CD14-positive monocyte (primary cell): ENCODE measurements at regions of chr7 and their contacts with region 1.

Region 1: GRCh38 chr7:19470031-19470430 is 238.8 kb downstream of the POLR1F start:
- DNase-seq: no peak
- H3K4me3 ChIP-seq: no peak overlapping the region
- H3K4me3 Mint-ChIP-seq: no peak overlapping the region
- H3K27ac ChIP-seq: no peak overlapping the region
- H3K27ac Mint-ChIP-seq: no peak overlapping the region
- H3K4me1 ChIP-seq: no peaks in the 10 kb centered on the region
- H3K4me1 Mint-ChIP-seq: no peaks in the 10 kb centered on the region
- H3K27me3 ChIP-seq: no peaks in the 10 kb centered on the region
- H3K27me3 Mint-ChIP-seq: no peaks in the 10 kb centered on the region
- CTCF ChIP-seq: no peak

Region 2: GRCh38 chr7:19437446-19437845 is 32.6 kb before region 1 on chr7:
- intact Hi-C with region 1: loop called in 1 of 2 experiments (anchors 1 kb)
- DNase-seq: no peak
- H3K4me3 ChIP-seq: no peak overlapping the region
- H3K4me3 Mint-ChIP-seq: no peak overlapping the region
- H3K27ac ChIP-seq: no peak overlapping the region
- H3K27ac Mint-ChIP-seq: no peak overlapping the region
- H3K4me1 ChIP-seq: no peaks in the 10 kb centered on the region
- H3K4me1 Mint-ChIP-seq: peaks cover 14% of the 10 kb centered on the region
- H3K27me3 ChIP-seq: no peaks in the 10 kb centered on the region
- H3K27me3 Mint-ChIP-seq: peaks cover 0 to 2% (median 0%) of the 10 kb centered on the region in 3 donors
- CTCF ChIP-seq: no peak